Activated CD4-positive, alpha-beta T cell treated with anti-CD3 and anti-CD28 coated beads for 36 hours (primary cell): ENCODE measurements at regions of chr1 and their contacts with region 1.

Region 1: GRCh38 chr1:52927212-52928014 is at the start of gene SCP2:
- DNase-seq: peak; percentile 90
- ATAC-seq: peak; percentile 94
- H3K4me3 Mint-ChIP-seq: peak within 1 kb of the TSS; percentile 78
- H3K27ac Mint-ChIP-seq: peak within 1 kb of the TSS; percentile 68
- H3K4me1 Mint-ChIP-seq: peaks cover 14% of the 10 kb centered on the region
- H3K27me3 Mint-ChIP-seq: no peaks in the 10 kb centered on the region
- total RNA-seq, gene SCP2: 46.6 to 67.1 TPM

Region 2: GRCh38 chr1:52674497-52675384 is 252.7 kb before region 1 on chr1:
- CTCF ChIA-PET with region 1: no interaction called
- POLR2A ChIA-PET with region 1: no interaction called
- intact Hi-C with region 1: no loop called
- DNase-seq: no peak
- ATAC-seq: peak; percentile 30
- H3K4me3 Mint-ChIP-seq: no peak overlapping the region
- H3K27ac Mint-ChIP-seq: no peak overlapping the region
- H3K4me1 Mint-ChIP-seq: peaks cover 6% of the 10 kb centered on the region
- H3K27me3 Mint-ChIP-seq: no peaks in the 10 kb centered on the region

Region 3: GRCh38 chr1:53014791-53015507 is 87.5 kb after region 1 on chr1:
- CTCF ChIA-PET with region 1: interaction called, 5 read pairs
- POLR2A ChIA-PET with region 1: no interaction called
- intact Hi-C with region 1: loop called in 1 of 2 experiments (anchors 1 kb)
- DNase-seq: peak; percentile 84
- ATAC-seq: peak; percentile 99
- H3K4me3 Mint-ChIP-seq: peak overlapping the region; percentile 79
- H3K27ac Mint-ChIP-seq: peak overlapping the region; percentile 89
- H3K4me1 Mint-ChIP-seq: peaks cover 24% of the 10 kb centered on the region
- H3K27me3 Mint-ChIP-seq: no peaks in the 10 kb centered on the region

Region 4: GRCh38 chr1:53238197-53239155 is 311.1 kb after region 1 on chr1 and contains the start of gene MAGOH:
- CTCF ChIA-PET with region 1: no interaction called
- POLR2A ChIA-PET with region 1: no interaction called
- intact Hi-C with region 1: no loop called
- DNase-seq: peak; percentile 95
- ATAC-seq: peak; percentile 98
- H3K4me3 Mint-ChIP-seq: peak within 1 kb of the TSS; percentile 96
- H3K27ac Mint-ChIP-seq: peak within 1 kb of the TSS; percentile 93
- H3K4me1 Mint-ChIP-seq: peaks cover 24% of the 10 kb centered on the region
- H3K27me3 Mint-ChIP-seq: no peaks in the 10 kb centered on the region
- total RNA-seq, gene MAGOH: 73.7 to 92.3 TPM